Panc1 (cell line): ENCODE measurements at regions of chr1 and their contacts with region 1.

Region 1: DNA sequence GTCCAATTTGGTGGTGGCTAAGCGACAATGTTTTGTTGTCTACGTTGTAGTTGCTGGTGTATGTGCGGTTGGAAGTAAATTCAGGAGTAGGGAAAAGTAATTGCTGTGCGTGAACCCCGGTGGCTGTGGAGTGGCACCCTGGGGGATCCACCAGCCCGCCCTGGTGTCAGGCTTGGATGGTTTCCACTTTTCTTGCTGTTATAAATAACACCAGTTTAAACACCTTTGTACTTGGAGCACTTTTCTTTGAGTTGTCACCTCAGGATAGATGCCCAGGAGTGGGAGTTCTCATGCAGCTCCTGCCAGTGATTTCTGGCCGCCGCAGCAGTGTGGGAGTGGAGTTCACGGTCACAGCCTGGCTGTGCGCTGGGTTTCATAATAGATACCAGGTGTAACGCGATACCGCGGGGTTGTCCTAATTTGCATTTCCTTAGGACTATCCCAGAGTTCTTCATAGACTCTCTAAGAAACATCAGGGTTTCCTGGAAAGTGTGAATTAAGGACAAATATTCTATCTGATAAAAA is 12.8 kb upstream of the TMEM200B start:
- DNase-seq: no peak
- ATAC-seq: no peak
- H3K4me3 ChIP-seq: no peak overlapping the region
- H3K27ac ChIP-seq: no peak overlapping the region
- H3K4me1 ChIP-seq: 0 out of 2 replicates have a peak, but pooled peaks cover 4% of the 10 kb centered on the region
- H3K27me3 ChIP-seq: no peaks in the 10 kb centered on the region
- CTCF ChIP-seq: no peak

Region 2: DNA sequence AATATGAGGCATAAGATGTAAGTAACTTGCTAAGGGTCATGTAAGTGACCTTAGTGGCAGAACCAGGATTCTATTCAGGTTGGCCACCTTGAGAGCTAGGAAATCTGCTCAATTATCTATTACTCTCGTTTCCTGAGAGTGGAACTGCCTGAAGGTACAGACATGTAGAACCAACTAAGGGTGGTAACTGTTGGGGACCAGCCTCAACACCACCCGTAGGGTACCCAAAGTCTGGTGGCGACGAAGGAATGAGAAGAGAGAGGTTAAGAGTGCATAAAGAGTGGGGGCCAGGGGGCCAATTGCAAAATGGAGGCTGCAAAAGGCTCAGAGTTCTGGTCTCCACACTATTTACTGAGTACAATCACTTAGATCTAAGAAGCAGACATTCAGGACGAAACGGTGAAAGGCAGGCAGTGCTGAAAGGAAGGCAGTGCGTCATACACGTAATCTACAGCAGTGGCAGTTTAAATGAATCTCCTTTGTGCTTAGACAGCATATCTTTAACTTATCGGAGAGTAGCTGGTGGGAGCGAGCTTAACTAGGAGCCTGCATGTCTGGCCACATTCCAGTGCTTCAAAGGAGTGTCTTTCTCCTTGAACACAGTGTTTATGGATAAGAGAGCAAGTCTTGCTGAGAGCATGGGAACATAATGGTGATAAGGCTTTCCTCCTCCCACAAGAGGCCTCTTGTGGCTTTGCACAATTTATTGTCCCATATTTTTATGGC is 20.3 kb after region 1 on chr1:
- CTCF ChIA-PET with region 1: no interaction called
- POLR2A ChIA-PET with region 1: interaction called, 21 read pairs
- in situ Hi-C with region 1: no loop called
- intact Hi-C with region 1: no loop called
- DNase-seq: no peak
- ATAC-seq: no peak; the same call in 1 of the 2 replicates
- H3K4me3 ChIP-seq: no peak overlapping the region
- H3K27ac ChIP-seq: no peak overlapping the region
- H3K4me1 ChIP-seq: no peaks in the 10 kb centered on the region
- H3K27me3 ChIP-seq: no peaks in the 10 kb centered on the region
- CTCF ChIP-seq: no peak

Region 3: GRCh38 chr1:29190718-29191117 is 54.3 kb after region 1 on chr1:
- CTCF ChIA-PET with region 1: no interaction called
- POLR2A ChIA-PET with region 1: no interaction called
- in situ Hi-C with region 1: no loop called
- intact Hi-C with region 1: no loop called
- DNase-seq: no peak
- ATAC-seq: no peak
- H3K4me3 ChIP-seq: no peak overlapping the region
- H3K27ac ChIP-seq: no peak overlapping the region
- H3K4me1 ChIP-seq: no peaks in the 10 kb centered on the region
- H3K27me3 ChIP-seq: no peaks in the 10 kb centered on the region
- CTCF ChIP-seq: no peak